ENCODE measurements at regions of chr4 and their contacts with region 1.

Region 1: DNA sequence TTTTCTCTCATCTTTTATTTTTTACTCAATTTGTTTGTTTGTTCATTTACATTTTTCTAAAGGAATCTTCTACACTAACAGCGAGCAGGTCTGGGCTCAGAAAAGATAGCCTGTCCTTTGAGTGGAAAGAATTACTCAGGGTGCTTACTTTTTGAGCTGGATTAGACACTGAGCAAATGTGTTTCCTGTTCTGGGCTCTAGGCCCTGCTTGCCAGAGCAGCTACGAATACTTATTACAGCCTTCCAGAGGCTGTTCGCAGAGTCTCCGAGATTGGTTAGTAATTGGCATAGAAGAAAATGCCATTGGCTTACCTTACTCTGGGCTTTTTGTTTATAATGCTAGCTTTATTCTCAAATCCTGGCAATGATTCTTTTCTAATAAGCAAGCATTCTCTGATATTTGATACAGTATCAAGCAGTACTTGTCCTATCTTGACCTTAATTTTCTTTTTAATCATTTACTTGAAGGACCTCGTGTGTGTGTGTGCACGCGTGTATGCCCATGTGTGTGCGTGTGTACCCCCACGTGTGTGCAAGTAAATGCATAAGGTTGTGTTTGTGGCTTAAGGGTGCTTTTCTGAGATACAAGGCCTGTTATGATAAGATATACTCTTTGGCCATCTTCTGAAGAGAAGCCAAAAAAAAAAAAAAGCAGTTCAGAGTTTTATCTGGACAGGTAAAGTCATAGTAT is 76.2 kb upstream of the GRXCR1 start:
- DNase-seq: no peak
- ATAC-seq: no peak
- H3K4me3 ChIP-seq: no peak overlapping the region
- H3K27ac ChIP-seq: no peak overlapping the region
- H3K4me1 ChIP-seq: no peaks in the 10 kb centered on the region
- H3K27me3 ChIP-seq: no peaks in the 10 kb centered on the region
- CTCF ChIP-seq: no peak

Region 2: DNA sequence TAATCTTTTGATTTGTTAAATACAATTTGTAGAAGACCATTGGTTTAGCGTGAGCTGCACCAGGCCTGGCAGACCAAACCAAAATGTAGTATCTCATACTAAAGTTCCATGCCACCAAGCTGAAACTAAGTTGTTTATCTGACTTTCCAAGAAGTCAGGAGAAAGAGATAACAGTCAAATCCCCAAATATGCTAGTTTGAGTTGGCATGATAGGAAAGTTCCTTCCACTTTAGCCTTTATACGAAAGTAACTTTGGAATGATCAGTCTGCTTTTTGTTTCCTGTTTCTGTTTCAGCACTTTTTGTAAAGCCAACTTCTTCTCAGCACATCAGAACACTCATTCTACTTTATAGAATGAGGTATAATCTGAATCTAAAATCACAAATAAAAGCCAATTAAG is 525.4 kb after region 1 on chr4:
- CTCF ChIA-PET with region 1: interaction called, 10 read pairs
- POLR2A ChIA-PET with region 1: no interaction called
- in situ Hi-C with region 1: no loop called
- intact Hi-C with region 1: no loop called
- DNase-seq: no peak
- ATAC-seq: no peak
- H3K4me3 ChIP-seq: no peak overlapping the region
- H3K27ac ChIP-seq: no peak overlapping the region
- H3K4me1 ChIP-seq: no peaks in the 10 kb centered on the region
- H3K27me3 ChIP-seq: no peaks in the 10 kb centered on the region
- CTCF ChIP-seq: no peak

Measured in Panc1 (cell line).